ENCODE measurements at regions of chr3 and their contacts with region 1.

Region 1: DNA sequence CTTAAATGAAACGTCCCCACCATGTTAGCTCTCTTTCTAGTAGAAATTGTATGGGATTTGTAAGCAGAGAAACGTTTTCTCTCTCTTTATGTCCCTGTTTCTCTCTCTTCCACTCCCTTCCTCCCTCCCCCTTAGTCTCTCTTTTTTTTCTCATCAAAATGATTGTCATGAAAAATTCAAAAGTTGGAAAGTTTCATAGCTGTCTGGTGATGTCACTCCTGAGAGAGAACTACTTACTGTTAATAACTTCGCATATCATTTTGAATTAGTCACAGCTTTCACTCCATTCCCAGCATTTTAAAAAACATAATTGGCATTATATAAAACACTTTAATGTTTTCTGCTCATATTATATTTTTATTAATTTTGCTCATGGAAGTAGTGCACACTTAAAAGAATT is 331.1 kb downstream of the C3orf38 start:
- DNase-seq: no peak
- ATAC-seq: no peak
- H3K4me3 ChIP-seq: no peak overlapping the region
- H3K4me3 Mint-ChIP-seq: no peak overlapping the region
- H3K27ac ChIP-seq: no peak overlapping the region
- H3K27ac Mint-ChIP-seq: no peak overlapping the region
- H3K4me1 ChIP-seq: no peaks in the 10 kb centered on the region
- H3K4me1 Mint-ChIP-seq: peaks cover 0 to 4% (median 0%) of the 10 kb centered on the region in 3 donors
- H3K27me3 ChIP-seq: no peaks in the 10 kb centered on the region
- H3K27me3 Mint-ChIP-seq: peaks cover 0 to 5% of the 10 kb centered on the region in 2 donors

Region 2: DNA sequence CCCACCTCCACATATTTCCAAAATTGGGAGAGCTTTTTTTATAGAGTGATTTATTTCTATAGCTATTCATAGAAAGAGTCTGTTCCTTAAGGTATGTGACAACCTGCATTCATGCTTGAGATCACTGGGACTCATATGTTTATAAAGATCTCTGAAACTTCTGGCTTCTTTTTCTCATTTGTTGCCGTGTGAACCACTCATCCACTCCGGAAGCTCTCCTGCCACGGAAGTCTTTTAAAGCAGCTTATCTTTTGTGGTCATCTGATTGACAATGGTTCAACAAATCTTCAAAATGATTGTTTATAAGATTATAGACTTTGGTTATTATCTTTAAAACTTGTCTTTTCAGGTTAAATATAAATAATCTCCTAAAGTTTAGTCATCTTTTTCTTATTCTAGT is 70.6 kb before region 1 on chr3:
- CTCF ChIA-PET with region 1: no interaction called
- POLR2A ChIA-PET with region 1: no interaction called
- DNase-seq: peak in 1 of 35 experiments; percentile 7
- ATAC-seq: peak in 2 of 4 experiments; percentile 54 to 57
- H3K4me3 ChIP-seq: no peak overlapping the region
- H3K4me3 Mint-ChIP-seq: no peak overlapping the region
- H3K27ac ChIP-seq: no peak overlapping the region
- H3K27ac Mint-ChIP-seq: peak overlapping the region in 1 of 2 donors; percentile 61
- H3K4me1 ChIP-seq: peaks cover 0 to 10% of the 10 kb centered on the region in 2 experiments
- H3K4me1 Mint-ChIP-seq: peaks cover 8 to 26% (median 17%) of the 10 kb centered on the region in 3 donors
- H3K27me3 ChIP-seq: no peaks in the 10 kb centered on the region
- H3K27me3 Mint-ChIP-seq: no peaks in the 10 kb centered on the region

Region 3: GRCh38 chr3:88744896-88745295 is 264.1 kb after region 1 on chr3:
- CTCF ChIA-PET with region 1: no interaction called
- POLR2A ChIA-PET with region 1: no interaction called
- DNase-seq: no peak
- ATAC-seq: no peak
- H3K4me3 ChIP-seq: no peak overlapping the region
- H3K4me3 Mint-ChIP-seq: no peak overlapping the region
- H3K27ac ChIP-seq: no peak overlapping the region
- H3K27ac Mint-ChIP-seq: no peak overlapping the region
- H3K4me1 ChIP-seq: no peaks in the 10 kb centered on the region
- H3K4me1 Mint-ChIP-seq: no peaks in the 10 kb centered on the region
- H3K27me3 ChIP-seq: no peaks in the 10 kb centered on the region
- H3K27me3 Mint-ChIP-seq: no peaks in the 10 kb centered on the region

Region 4: DNA sequence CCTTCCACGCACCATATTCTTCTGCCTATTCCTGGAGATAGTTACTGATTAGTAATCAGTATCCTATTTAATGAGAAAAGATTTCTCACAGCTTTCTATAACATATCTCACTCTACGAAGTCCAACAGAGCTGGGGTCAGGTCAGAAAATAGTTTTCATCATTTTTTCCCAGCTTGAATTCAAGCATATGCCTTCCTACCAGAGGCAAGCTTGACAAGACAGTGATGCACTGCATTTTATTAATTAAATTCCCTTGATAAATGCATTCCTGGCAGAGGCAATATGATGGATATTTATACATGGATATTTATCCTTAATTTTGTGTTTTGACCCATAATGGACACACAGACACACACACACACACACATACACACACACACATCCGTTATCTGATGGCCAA is 1588.0 kb after region 1 on chr3:
- CTCF ChIA-PET with region 1: no interaction called
- POLR2A ChIA-PET with region 1: interaction called in 1 of 2 experiments, 20 read pairs
- DNase-seq: no peak
- ATAC-seq: no peak
- H3K4me3 ChIP-seq: no peak overlapping the region
- H3K4me3 Mint-ChIP-seq: no peak overlapping the region
- H3K27ac ChIP-seq: no peak overlapping the region
- H3K27ac Mint-ChIP-seq: no peak overlapping the region
- H3K4me1 ChIP-seq: no peaks in the 10 kb centered on the region
- H3K4me1 Mint-ChIP-seq: no peaks in the 10 kb centered on the region
- H3K27me3 ChIP-seq: no peaks in the 10 kb centered on the region
- H3K27me3 Mint-ChIP-seq: no peaks in the 10 kb centered on the region

Measured in T-cell (primary cell).